ENCODE measurements at regions of chr5 and their contacts with region 1.

Region 1: GRCh38 chr5:159915904-159916840 is at the start of gene ADRA1B:
- DNase-seq: peak; percentile 62 to 78
- ATAC-seq: peak; percentile 76 to 93 (median 88)
- H3K4me3 ChIP-seq: peak within 1 kb of the TSS; percentile 16 to 63 (median 54)
- H3K27ac ChIP-seq: peak within 1 kb of the TSS in 9 of 10 donors; percentile 26 to 78 (median 70)
- H3K4me1 ChIP-seq: peaks cover 0 to 29% (median 11%) of the 10 kb centered on the region in 9 donors
- H3K27me3 ChIP-seq: peaks cover 0 to 59% (median 0%) of the 10 kb centered on the region in 7 donors
- CTCF ChIP-seq: peak; percentile 35 to 75 (median 55)
- total RNA-seq, gene ADRA1B: 0.77 to 4.1 (median 1.8) TPM

Region 2: DNA sequence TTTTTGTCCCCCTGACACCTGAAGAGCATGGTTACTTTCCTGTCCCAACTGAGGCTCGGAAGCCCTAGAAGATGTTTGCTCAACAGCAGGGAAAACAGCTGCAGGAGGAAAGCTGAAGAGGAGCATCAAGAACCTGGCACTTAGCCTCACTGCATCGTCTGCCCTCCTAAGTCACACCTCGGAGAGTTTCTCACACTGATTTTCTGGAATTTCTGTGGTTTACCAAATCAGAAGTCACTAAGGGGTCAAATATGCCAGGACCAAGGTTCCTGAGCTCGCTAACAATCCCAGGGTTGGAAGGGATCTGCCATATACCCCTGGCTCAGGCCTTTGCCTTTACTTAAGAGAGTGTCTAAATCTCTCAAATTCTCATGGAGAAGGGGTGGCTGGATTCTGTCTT is 591.2 kb before region 1 on chr5:
- intact Hi-C with region 1: loop called in 2 of 10 experiments (anchors 5 kb)
- DNase-seq: no peak
- ATAC-seq: no peak
- H3K4me3 ChIP-seq: no peak overlapping the region
- H3K27ac ChIP-seq: no peak overlapping the region
- H3K4me1 ChIP-seq: no peaks in the 10 kb centered on the region
- H3K27me3 ChIP-seq: peaks cover 0 to 36% (median 10%) of the 10 kb centered on the region in 7 donors
- CTCF ChIP-seq: no peak

Region 3: DNA sequence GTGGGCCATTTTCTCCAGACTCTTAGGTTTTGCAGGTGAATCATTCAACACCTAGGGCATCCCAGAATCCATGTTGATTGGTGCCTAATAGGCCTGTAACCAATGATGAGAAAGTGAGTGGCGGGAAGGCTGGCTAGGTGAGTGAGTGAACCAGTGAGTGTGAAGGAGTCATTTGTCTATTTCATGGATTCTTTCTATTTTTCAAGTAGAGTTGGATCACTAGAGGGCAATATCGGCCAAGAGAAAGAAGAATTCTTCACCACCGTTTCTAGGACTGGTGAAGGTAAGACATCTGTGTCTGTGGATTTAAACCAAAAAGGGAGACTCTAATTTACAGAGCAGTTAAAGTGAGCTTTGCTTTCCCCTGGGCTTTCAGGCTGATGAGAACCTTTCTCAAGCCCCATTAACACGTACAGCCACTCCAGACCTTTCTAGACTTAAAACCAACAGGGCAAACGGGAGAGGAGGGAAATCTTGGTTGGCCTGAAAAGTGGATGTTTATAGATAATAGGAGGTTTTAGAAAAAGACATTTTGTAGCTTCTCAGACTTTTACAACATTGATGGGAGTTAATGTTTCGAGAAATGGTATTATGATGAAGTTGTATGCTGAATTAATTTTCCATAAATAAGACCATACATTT is 471.6 kb before region 1 on chr5:
- intact Hi-C with region 1: loop called in 8 of 10 experiments (anchors 2 to 10 kb)
- DNase-seq: no peak
- ATAC-seq: peak in 1 of 8 donors; percentile 32
- H3K4me3 ChIP-seq: no peak overlapping the region
- H3K27ac ChIP-seq: no peak overlapping the region
- H3K4me1 ChIP-seq: peaks cover 0 to 24% (median 0%) of the 10 kb centered on the region in 9 donors
- H3K27me3 ChIP-seq: no peaks in the 10 kb centered on the region
- CTCF ChIP-seq: peak in 7 of 9 donors; percentile 21 to 64 (median 49)

Region 4: DNA sequence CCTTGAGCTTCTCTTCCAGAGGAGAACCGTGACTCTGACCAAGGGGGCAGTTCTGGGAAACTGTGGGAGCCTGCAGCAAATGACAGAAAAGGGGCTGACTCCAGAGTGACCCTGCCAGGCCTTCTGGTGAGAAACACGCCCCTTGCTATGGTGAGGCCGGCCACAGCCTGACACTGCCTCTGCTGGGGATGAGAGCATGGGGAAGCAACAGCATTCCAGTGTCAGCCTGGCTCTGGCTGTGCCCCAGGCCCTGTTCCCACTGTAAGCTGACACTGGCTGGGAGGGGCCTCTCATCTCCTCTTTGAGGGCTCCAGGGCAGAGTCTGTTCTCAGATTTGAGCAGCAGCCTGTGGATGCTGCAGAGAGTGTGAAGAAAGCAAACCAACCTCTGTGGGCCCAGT is 405.9 kb before region 1 on chr5:
- intact Hi-C with region 1: loop called in 6 of 10 experiments (anchors 5 to 10 kb)
- DNase-seq: peak; percentile 71 to 83
- ATAC-seq: peak; percentile 90 to 98 (median 94)
- H3K4me3 ChIP-seq: no peak overlapping the region
- H3K27ac ChIP-seq: peak overlapping the region; percentile 56 to 86 (median 80)
- H3K4me1 ChIP-seq: peaks cover 0 to 52% (median 21%) of the 10 kb centered on the region in 9 donors
- H3K27me3 ChIP-seq: no peaks in the 10 kb centered on the region
- CTCF ChIP-seq: peak in 2 of 9 donors; percentile 22 to 33

Region 5: GRCh38 chr5:159525117-159525516 is 391.1 kb before region 1 on chr5:
- intact Hi-C with region 1: loop called in 2 of 10 experiments (anchors 5 to 10 kb)
- DNase-seq: peak in 1 of 2 donors; percentile 13
- ATAC-seq: peak; percentile 17 to 71 (median 50)
- H3K4me3 ChIP-seq: no peak overlapping the region
- H3K27ac ChIP-seq: no peak overlapping the region
- H3K4me1 ChIP-seq: peaks cover 0 to 12% (median 5%) of the 10 kb centered on the region in 9 donors
- H3K27me3 ChIP-seq: no peaks in the 10 kb centered on the region
- CTCF ChIP-seq: peak in 5 of 9 donors; percentile 7 to 42 (median 29)

Region 6: DNA sequence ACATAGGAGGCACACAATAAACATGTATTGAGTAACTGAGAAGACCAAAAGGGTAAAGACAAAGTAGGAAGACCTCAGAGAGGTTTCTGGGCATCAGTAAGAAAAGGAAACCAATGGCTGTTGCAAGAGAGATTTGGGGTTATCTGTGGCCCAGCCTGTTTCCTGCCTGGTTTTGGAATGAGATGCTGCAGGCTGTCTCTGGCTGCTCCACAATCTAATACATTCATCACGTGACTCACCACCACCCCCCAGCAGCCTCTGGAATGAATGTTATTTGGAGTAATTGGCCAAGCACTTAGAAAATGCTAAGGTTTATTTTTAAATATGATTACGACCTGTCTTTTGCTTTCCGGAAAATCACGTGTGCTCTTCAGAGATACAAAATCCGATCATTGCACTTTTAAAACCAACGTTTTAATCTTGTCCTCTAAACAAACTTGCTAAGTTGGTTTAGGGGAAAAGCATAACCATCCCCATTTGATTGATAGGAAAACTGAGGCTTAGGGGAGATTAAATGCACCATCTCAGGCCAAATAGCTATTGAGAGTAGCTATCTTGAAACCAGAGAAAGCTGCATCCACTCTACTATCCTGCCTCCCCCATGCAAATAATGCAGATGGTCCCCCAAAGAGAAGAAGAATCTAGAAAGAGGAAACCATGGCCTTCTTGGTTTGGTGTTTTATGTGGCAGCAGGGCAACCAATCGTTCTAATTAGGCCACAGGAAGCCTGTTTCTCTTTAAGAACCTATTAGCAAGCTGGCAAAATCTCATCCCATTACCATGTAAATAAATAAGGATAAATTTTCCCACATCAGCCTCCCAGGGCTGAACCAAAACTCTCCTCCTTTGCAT is 151.7 kb before region 1 on chr5:
- intact Hi-C with region 1: loop called in 1 of 10 experiments (anchors 5 kb)
- DNase-seq: peak in 1 of 2 donors; percentile 37
- ATAC-seq: peak; percentile 40 to 87 (median 70)
- H3K4me3 ChIP-seq: no peak overlapping the region
- H3K27ac ChIP-seq: peak overlapping the region in 6 of 10 donors; percentile 1 to 76 (median 38)
- H3K4me1 ChIP-seq: peaks cover 0 to 22% (median 12%) of the 10 kb centered on the region in 9 donors
- H3K27me3 ChIP-seq: no peaks in the 10 kb centered on the region
- CTCF ChIP-seq: no peak

Region 7: GRCh38 chr5:160064995-160065630 is 148.9 kb after region 1 on chr5:
- intact Hi-C with region 1: no loop called
- DNase-seq: no peak
- ATAC-seq: no peak
- H3K4me3 ChIP-seq: no peak overlapping the region
- H3K27ac ChIP-seq: peak overlapping the region in 2 of 10 donors; percentile 10 to 20
- H3K4me1 ChIP-seq: peaks cover 0 to 12% (median 8%) of the 10 kb centered on the region in 9 donors
- H3K27me3 ChIP-seq: no peaks in the 10 kb centered on the region
- CTCF ChIP-seq: no peak